IMR-90 (cell line): ENCODE measurements at regions of chr5 and their contacts with region 1.

Region 1: DNA sequence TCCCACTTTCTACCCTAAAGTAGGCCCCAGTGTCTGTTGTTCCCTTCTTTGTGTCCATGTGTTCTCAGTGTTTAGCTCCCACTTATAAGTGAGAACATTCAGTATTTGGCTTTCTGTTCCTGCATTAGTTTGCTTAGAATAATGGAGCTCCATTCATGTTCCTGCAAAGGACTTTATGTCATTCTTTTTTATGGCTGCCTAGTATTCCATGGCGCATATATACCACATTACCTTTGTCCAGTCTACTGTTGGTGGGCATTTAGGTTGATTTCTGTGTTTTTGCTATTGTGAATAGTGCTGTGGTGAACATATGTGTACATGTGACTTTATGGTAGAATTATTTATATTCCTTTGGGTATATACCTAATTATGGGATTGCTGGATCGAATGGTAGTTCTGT is 30.4 kb downstream of the DDX4 start:
- DNase-seq: no peak
- ATAC-seq: no peak
- H3K4me3 ChIP-seq: no peak overlapping the region
- H3K27ac ChIP-seq: no peak overlapping the region
- H3K4me1 ChIP-seq: no peaks in the 10 kb centered on the region; the same call in 1 of the 2 replicates
- H3K27me3 ChIP-seq: no peaks in the 10 kb centered on the region
- CTCF ChIP-seq: no peak
- POLR2A ChIP-seq: no peak
- RAD21 ChIP-seq: no peak

Region 2: GRCh38 chr5:55278778-55279177 is 489.5 kb before region 1 on chr5:
- CTCF ChIA-PET with region 1: no interaction called
- POLR2A ChIA-PET with region 1: no interaction called
- dilution Hi-C with region 1: no loop called
- in situ Hi-C with region 1: no loop called
- intact Hi-C with region 1: no loop called
- DNase-seq: peak; percentile 75
- ATAC-seq: peak; percentile 82
- H3K4me3 ChIP-seq: no peak overlapping the region
- H3K27ac ChIP-seq: no peak overlapping the region
- H3K4me1 ChIP-seq: no peaks in the 10 kb centered on the region
- H3K27me3 ChIP-seq: no peaks in the 10 kb centered on the region
- CTCF ChIP-seq: no peak
- POLR2A ChIP-seq: no peak
- RAD21 ChIP-seq: no peak

Region 3: DNA sequence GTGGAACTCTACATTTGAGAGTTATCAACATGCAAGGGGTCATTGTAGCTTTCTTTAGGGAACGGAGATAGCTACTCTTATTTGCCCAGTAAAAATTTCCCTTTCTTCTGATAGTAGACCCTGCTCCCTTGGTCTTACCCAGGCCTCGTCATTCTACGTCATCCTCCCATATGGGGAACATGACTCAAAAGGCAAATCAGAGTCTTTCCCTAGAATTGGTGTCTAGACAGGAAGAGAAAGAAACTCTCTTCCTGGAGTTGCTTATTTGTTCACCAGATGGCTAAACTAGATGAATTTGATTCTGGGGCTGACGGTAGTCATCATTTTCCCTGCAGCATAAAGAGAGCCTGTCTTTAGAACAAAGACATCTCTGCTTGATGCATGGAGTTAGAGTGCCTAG is 44.0 kb before region 1 on chr5:
- CTCF ChIA-PET with region 1: no interaction called
- POLR2A ChIA-PET with region 1: no interaction called
- dilution Hi-C with region 1: no loop called
- in situ Hi-C with region 1: no loop called
- intact Hi-C with region 1: loop called (anchors 5 kb)
- DNase-seq: peak; percentile 17
- ATAC-seq: no peak
- H3K4me3 ChIP-seq: no peak overlapping the region
- H3K27ac ChIP-seq: no peak overlapping the region
- H3K4me1 ChIP-seq: no peaks in the 10 kb centered on the region
- H3K27me3 ChIP-seq: peaks cover 3% of the 10 kb centered on the region; the same call in 1 of the 2 replicates
- CTCF ChIP-seq: no peak
- POLR2A ChIP-seq: no peak
- RAD21 ChIP-seq: no peak

Region 4: DNA sequence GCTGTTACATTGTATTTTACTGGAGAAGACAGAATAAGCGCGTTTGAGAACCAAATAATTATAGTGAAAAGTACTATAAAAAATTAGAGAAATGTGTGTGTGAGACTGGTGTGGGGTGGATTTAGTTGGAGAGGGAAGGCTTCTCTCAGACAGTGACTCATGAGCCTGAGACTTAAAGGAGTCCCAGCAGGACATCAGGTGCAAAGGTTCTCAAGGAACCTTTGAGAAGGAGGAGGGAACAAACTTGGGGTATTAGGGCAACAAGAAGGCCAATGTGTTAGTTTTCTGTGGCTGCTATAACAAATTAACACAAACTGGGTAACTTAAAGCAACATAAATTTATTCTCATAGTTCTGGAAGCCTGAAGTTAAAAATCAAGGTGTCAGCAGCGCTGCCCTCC is 25.5 kb before region 1 on chr5:
- CTCF ChIA-PET with region 1: no interaction called
- POLR2A ChIA-PET with region 1: no interaction called
- dilution Hi-C with region 1: no loop called
- in situ Hi-C with region 1: no loop called
- intact Hi-C with region 1: no loop called
- DNase-seq: no peak
- ATAC-seq: no peak
- H3K4me3 ChIP-seq: no peak overlapping the region
- H3K27ac ChIP-seq: no peak overlapping the region
- H3K4me1 ChIP-seq: no peaks in the 10 kb centered on the region
- H3K27me3 ChIP-seq: peaks cover 7% of the 10 kb centered on the region
- CTCF ChIP-seq: no peak
- POLR2A ChIP-seq: no peak
- RAD21 ChIP-seq: no peak